ENCODE measurements at regions of chr17 and their contacts with region 1.

Region 1: GRCh38 chr17:10646392-10646990 is 10.6 kb downstream of the MYH3 start:
- DNase-seq: peak; percentile 70
- ATAC-seq: peak; percentile 93
- H3K4me3 ChIP-seq: no peak overlapping the region
- H3K27ac ChIP-seq: no peak overlapping the region
- H3K4me1 ChIP-seq: no peaks in the 10 kb centered on the region; the same call in 1 of the 2 replicates
- H3K27me3 ChIP-seq: no peaks in the 10 kb centered on the region
- CTCF ChIP-seq: peak; percentile 90
- POLR2A ChIP-seq: 0 out of 2 replicates have a peak, but pooled peaks have one; percentile 25
- RAD21 ChIP-seq: peak; percentile 87

Region 2: DNA sequence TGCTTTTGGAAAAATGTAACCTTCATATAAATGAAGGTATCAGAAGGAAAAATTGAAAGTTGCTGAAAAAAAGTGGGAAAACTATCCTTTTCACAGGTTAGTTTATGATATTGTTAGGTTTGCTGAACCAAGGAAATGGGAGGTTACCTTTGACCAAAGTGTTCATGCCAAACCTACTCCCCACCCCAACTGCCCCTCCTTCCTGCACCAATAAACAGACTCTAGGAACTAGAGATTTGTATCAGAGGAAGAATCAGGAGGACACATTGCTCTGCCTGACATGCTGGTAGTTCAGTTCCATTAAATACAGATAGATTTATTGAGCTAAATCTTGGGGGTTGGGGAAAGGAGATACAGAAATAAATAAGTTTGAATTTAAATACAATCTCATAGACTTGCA is 242.9 kb before region 1 on chr17:
- CTCF ChIA-PET with region 1: no interaction called
- POLR2A ChIA-PET with region 1: no interaction called
- dilution Hi-C with region 1: no loop called
- in situ Hi-C with region 1: no loop called
- intact Hi-C with region 1: no loop called
- DNase-seq: no peak
- ATAC-seq: no peak
- H3K4me3 ChIP-seq: no peak overlapping the region
- H3K27ac ChIP-seq: no peak overlapping the region
- H3K4me1 ChIP-seq: no peaks in the 10 kb centered on the region
- H3K27me3 ChIP-seq: no peaks in the 10 kb centered on the region
- CTCF ChIP-seq: no peak
- POLR2A ChIP-seq: no peak
- RAD21 ChIP-seq: no peak

Region 3: DNA sequence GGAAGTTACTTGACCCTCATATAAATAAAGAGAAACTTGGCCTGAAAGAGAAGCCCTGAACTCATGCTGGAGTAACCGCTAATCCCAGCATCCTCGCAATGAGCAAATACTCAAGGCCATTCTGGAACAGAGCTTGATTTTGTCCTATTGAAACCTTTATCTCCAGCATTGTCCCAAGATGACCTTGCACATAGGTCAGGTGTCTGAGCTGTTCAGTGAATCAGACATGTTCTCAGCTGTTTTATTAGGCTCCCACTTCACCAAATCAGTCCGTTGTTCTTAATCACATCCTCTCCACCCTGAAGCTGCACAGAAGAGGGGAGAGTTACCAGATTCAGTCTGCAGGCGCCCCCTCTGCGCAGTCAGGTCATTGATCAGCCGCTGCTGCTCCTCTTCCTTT is 119.1 kb before region 1 on chr17:
- CTCF ChIA-PET with region 1: no interaction called
- POLR2A ChIA-PET with region 1: no interaction called
- dilution Hi-C with region 1: no loop called
- in situ Hi-C with region 1: no loop called
- intact Hi-C with region 1: no loop called
- DNase-seq: no peak
- ATAC-seq: no peak
- H3K4me3 ChIP-seq: no peak overlapping the region
- H3K27ac ChIP-seq: no peak overlapping the region
- H3K4me1 ChIP-seq: no peaks in the 10 kb centered on the region
- H3K27me3 ChIP-seq: no peaks in the 10 kb centered on the region
- CTCF ChIP-seq: no peak
- POLR2A ChIP-seq: no peak
- RAD21 ChIP-seq: no peak

Region 4: GRCh38 chr17:10683853-10684252 is 37.4 kb after region 1 on chr17:
- CTCF ChIA-PET with region 1: interaction called, 6 read pairs
- POLR2A ChIA-PET with region 1: no interaction called
- dilution Hi-C with region 1: no loop called
- in situ Hi-C with region 1: no loop called
- intact Hi-C with region 1: loop called (anchors 5 kb)
- DNase-seq: peak; percentile 39
- ATAC-seq: no peak
- H3K4me3 ChIP-seq: no peak overlapping the region
- H3K27ac ChIP-seq: no peak overlapping the region
- H3K4me1 ChIP-seq: peaks cover 2% of the 10 kb centered on the region; the same call in 1 of the 2 replicates
- H3K27me3 ChIP-seq: no peaks in the 10 kb centered on the region
- CTCF ChIP-seq: peak; percentile 52
- POLR2A ChIP-seq: no peak
- RAD21 ChIP-seq: peak; percentile 34

Region 5: DNA sequence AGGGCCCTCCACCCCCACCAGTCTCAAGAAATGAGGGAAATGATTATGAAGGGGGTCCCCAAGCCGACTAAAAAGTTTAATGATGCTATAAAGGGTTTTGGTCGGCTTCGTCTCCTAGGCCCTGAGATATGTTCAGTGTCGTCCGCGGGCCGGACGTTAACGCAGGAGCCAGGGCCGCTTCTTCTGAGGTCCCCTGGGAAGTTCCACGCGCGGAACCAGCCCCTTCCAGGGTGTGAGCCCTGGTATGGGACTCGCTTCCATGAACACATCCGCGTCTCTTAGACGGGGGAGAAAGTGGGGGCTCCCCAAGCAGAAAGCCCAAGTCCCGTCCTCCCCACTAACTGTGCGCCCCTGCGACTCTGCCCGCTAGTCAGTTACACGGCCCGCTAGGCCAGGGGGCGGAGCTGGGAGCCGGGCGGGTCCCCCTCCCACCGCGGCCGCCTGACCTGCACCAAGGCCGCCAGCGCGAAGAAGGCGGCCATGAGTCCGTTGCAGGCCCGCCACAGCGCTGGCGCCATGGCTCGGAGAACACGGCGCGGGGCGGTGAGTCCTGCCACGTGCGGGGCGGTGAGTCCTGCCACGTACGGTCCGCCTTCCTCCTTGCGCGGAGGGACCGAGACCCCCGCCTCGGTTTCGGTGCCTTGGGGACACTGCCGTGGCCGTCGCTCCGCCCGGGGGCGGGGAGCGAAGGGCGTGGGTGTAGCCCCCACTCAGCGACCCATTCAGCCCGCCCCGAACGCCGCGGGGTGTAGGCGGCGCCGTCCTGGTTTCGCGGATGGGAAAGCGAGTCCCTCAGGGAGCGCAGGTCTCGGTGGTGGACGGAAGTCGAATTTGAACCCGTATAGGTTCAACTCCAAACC is 83.1 kb after region 1 on chr17 and contains the start of gene TMEM220:
- CTCF ChIA-PET with region 1: no interaction called
- POLR2A ChIA-PET with region 1: no interaction called
- dilution Hi-C with region 1: no loop called
- in situ Hi-C with region 1: loop called (anchors 10 kb)
- intact Hi-C with region 1: loop called (anchors 2 kb)
- DNase-seq: peak; percentile 59
- ATAC-seq: peak; percentile 96
- H3K4me3 ChIP-seq: peak within 1 kb of the TSS; percentile 81
- H3K27ac ChIP-seq: peak within 1 kb of the TSS; percentile 81
- H3K4me1 ChIP-seq: no peaks in the 10 kb centered on the region; the same call in 1 of the 2 replicates
- H3K27me3 ChIP-seq: no peaks in the 10 kb centered on the region; the same call in 1 of the 2 replicates
- CTCF ChIP-seq: no peak
- POLR2A ChIP-seq: peak; percentile 43; the same call in 1 of the 2 replicates
- RAD21 ChIP-seq: no peak
- total RNA-seq, gene TMEM220: 1.1 and 1.7 TPM in 2 replicates

Region 6: DNA sequence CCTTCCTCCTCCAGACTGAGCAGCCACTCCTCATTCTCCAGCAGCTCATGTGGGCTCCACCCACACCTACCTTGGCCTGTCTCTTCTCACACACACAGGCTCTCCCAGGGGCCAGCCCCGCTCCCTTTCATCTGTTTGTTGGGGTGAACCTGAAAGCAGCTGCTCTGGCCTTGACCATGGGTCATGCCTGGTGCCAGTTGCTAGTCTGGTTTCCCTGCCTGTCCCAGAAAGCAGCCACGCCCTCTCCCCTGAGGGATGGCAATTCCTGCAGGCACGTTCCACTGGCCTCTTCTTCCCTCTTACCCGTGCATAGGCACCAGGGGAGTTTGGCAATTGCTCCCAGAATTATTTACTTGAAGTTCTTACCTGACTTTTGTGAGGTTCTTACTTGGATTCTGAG is 168.9 kb after region 1 on chr17:
- CTCF ChIA-PET with region 1: no interaction called
- POLR2A ChIA-PET with region 1: no interaction called
- dilution Hi-C with region 1: no loop called
- in situ Hi-C with region 1: no loop called
- intact Hi-C with region 1: no loop called
- DNase-seq: no peak
- ATAC-seq: no peak
- H3K4me3 ChIP-seq: no peak overlapping the region
- H3K27ac ChIP-seq: no peak overlapping the region
- H3K4me1 ChIP-seq: no peaks in the 10 kb centered on the region
- H3K27me3 ChIP-seq: no peaks in the 10 kb centered on the region
- CTCF ChIP-seq: no peak
- POLR2A ChIP-seq: no peak
- RAD21 ChIP-seq: no peak

Region 7: GRCh38 chr17:10844621-10845387 is 198.3 kb after region 1 on chr17:
- CTCF ChIA-PET with region 1: interaction called, 8 read pairs
- POLR2A ChIA-PET with region 1: no interaction called
- dilution Hi-C with region 1: no loop called
- in situ Hi-C with region 1: loop called (anchors 5 kb)
- intact Hi-C with region 1: loop called (anchors 1 kb)
- DNase-seq: peak; percentile 53
- ATAC-seq: peak; percentile 99
- H3K4me3 ChIP-seq: peak overlapping the region; percentile 39
- H3K27ac ChIP-seq: no peak overlapping the region
- H3K4me1 ChIP-seq: no peaks in the 10 kb centered on the region
- H3K27me3 ChIP-seq: peaks cover 2% of the 10 kb centered on the region; the same call in 1 of the 2 replicates
- CTCF ChIP-seq: peak; percentile 87
- POLR2A ChIP-seq: no peak
- RAD21 ChIP-seq: peak; percentile 81

Region 8: GRCh38 chr17:11986942-11987329 is 1340.4 kb after region 1 on chr17:
- CTCF ChIA-PET with region 1: interaction called, 5 read pairs
- POLR2A ChIA-PET with region 1: no interaction called
- dilution Hi-C with region 1: no loop called
- in situ Hi-C with region 1: loop called (anchors 25 kb)
- intact Hi-C with region 1: loop called (anchors 5 kb)
- DNase-seq: peak; percentile 60
- ATAC-seq: peak; percentile 92
- H3K4me3 ChIP-seq: no peak overlapping the region
- H3K27ac ChIP-seq: no peak overlapping the region
- H3K4me1 ChIP-seq: no peaks in the 10 kb centered on the region
- H3K27me3 ChIP-seq: no peaks in the 10 kb centered on the region
- CTCF ChIP-seq: peak; percentile 58
- POLR2A ChIP-seq: no peak
- RAD21 ChIP-seq: peak; percentile 62